OCI-LY7 (cell line): ENCODE measurements at regions of chr1 and their contacts with region 1.

Region 1: DNA sequence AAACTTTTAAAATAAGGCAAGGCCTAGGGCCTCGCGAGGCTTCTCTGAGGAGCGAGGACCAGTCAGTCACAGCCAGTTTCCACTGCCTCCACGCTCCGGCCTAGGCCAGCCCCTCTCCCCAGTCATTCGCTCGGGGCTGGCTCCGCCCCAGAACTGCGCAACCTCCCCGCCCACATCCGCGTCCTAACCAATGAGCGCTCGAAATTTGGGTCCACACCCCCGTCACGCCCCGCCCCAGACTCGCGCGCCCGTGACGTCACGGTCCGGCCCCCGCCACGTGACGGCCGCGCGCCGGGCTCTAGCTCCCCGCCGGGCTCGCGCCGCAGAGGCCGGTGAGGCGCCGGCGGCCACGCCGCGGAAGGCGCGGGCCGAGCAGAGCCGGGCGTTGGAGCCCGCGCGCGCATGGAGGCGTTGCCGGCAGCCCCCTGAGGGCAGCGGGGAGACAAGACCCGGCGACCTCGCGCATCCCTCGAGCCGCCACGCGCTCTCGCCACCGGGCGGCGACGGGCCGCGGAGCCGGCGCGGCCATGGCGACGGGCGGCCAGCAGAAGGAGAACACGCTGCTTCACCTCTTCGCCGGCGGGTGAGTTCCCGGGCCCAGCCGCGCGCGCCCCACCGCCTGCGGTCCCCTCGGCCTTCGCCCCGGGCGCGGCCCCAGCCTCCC is at the start of gene SLC25A33:
- DNase-seq: peak; percentile 98
- H3K4me3 ChIP-seq: peak within 1 kb of the TSS; percentile 98
- H3K27ac ChIP-seq: peak within 1 kb of the TSS; percentile 77
- H3K4me1 ChIP-seq: peaks cover 23% of the 10 kb centered on the region
- CTCF ChIP-seq: no peak
- total RNA-seq, gene SLC25A33: 14.4 and 15.1 TPM in 2 replicates

Region 2: GRCh38 chr1:8687039-8687438 is 852.3 kb before region 1 on chr1:
- CTCF ChIA-PET with region 1: no interaction called
- POLR2A ChIA-PET with region 1: no interaction called
- intact Hi-C with region 1: no loop called
- DNase-seq: no peak
- H3K4me3 ChIP-seq: no peak overlapping the region
- H3K27ac ChIP-seq: no peak overlapping the region
- H3K4me1 ChIP-seq: peaks cover 16% of the 10 kb centered on the region
- CTCF ChIP-seq: no peak

Region 3: GRCh38 chr1:9494929-9495758 is 44.2 kb before region 1 on chr1:
- CTCF ChIA-PET with region 1: no interaction called
- POLR2A ChIA-PET with region 1: interaction called, 3 read pairs
- intact Hi-C with region 1: loop called (anchors 2 kb)
- DNase-seq: peak; percentile 82
- H3K4me3 ChIP-seq: peak overlapping the region; percentile 62
- H3K27ac ChIP-seq: no peak overlapping the region
- H3K4me1 ChIP-seq: peaks cover 9% of the 10 kb centered on the region
- CTCF ChIP-seq: peak; percentile 95

Region 4: DNA sequence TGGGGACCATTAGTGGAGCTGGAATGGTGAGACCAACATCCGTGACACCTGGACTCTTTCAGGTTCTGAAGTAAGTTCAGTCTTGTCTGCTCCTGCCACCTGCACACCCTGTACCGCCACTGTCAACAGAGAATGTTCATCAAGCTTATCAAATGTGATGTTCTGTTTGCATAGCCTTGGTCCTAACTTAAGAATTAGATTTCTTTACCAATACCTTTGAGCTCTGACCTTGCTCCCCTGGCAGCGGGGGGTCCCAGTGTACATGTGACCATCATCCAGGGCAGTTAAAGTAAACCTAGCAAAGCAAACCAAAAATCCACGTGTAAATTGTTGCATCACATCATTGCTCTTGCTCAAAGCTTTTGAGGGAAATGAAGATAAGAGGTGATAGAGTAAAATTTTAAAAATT is 14.4 kb after region 1 on chr1:
- CTCF ChIA-PET with region 1: interaction called, 4 read pairs
- POLR2A ChIA-PET with region 1: interaction called, 10 read pairs
- intact Hi-C with region 1: no loop called
- DNase-seq: no peak
- H3K4me3 ChIP-seq: no peak overlapping the region
- H3K27ac ChIP-seq: no peak overlapping the region
- H3K4me1 ChIP-seq: peaks cover 23% of the 10 kb centered on the region
- CTCF ChIP-seq: no peak

Region 5: DNA sequence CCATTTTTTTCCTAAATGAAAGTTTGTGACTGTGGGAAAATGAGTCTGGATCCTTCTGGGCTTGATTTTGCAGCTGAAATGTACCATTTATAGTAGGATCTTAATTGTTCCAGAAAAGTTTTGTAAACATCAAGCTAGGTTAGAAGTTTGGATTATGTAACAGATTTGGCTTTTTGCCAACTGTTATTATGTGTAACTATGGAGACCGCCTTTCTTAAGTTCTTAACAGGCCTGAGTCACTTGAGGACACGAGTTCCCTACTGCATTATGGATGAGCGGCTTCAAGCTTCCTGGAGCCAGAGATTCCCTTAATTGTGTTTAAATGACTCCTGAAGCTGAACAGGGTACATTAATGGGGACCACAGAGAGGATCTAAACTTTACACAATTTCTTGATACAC is 22.1 kb after region 1 on chr1:
- CTCF ChIA-PET with region 1: interaction called, 3 read pairs
- POLR2A ChIA-PET with region 1: interaction called, 7 read pairs
- intact Hi-C with region 1: loop called (anchors 2 kb)
- DNase-seq: peak; percentile 24
- H3K4me3 ChIP-seq: no peak overlapping the region
- H3K27ac ChIP-seq: no peak overlapping the region
- H3K4me1 ChIP-seq: peaks cover 52% of the 10 kb centered on the region
- CTCF ChIP-seq: no peak

Region 6: GRCh38 chr1:9573723-9574122 is 34.4 kb after region 1 on chr1:
- CTCF ChIA-PET with region 1: no interaction called
- POLR2A ChIA-PET with region 1: interaction called, 4 read pairs
- intact Hi-C with region 1: loop called (anchors 5 kb)
- DNase-seq: peak; percentile 55
- H3K4me3 ChIP-seq: no peak overlapping the region
- H3K27ac ChIP-seq: no peak overlapping the region
- H3K4me1 ChIP-seq: peaks cover 17% of the 10 kb centered on the region
- CTCF ChIP-seq: peak; percentile 75

Region 7: DNA sequence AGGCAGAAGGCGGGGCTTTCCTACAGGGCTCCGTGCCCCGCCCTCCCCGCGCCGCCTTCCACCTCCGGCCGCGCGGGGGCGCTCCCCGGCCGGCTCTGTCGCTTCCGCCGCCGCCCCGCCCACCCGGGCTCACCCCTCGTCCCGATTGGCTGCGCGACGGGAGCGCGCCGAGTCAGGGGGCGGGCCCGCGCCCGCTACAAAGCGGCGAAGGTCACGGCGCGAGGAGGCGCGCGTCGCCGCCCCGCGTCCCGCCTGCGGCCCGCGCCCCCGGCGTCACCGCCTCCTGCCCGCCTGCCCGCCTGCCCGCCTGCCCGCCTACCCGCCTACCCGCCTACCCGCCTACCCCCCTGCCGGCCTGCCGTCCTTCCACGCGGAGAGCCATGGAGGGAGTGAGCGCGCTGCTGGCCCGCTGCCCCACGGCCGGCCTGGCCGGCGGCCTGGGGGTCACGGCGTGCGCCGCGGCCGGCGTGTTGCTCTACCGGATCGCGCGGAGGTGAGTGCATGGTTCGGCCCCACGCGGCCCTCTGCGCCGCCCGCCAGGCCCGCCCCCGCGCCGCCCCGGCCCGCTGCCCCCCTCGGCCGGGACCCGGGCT is 49.4 kb after region 1 on chr1 and contains the start of gene TMEM201:
- CTCF ChIA-PET with region 1: no interaction called
- POLR2A ChIA-PET with region 1: no interaction called
- intact Hi-C with region 1: loop called (anchors 1 kb)
- DNase-seq: peak; percentile 95
- H3K4me3 ChIP-seq: peak within 1 kb of the TSS; percentile 90
- H3K27ac ChIP-seq: no peak within 1 kb of the TSS
- H3K4me1 ChIP-seq: peaks cover 40% of the 10 kb centered on the region
- CTCF ChIP-seq: peak; percentile 79
- total RNA-seq, gene TMEM201: 5.3 and 7.5 TPM in 2 replicates

Region 8: GRCh38 chr1:9942939-9943788 is 403.9 kb after region 1 on chr1 and contains the starts of genes LZIC and NMNAT1:
- CTCF ChIA-PET with region 1: no interaction called
- POLR2A ChIA-PET with region 1: no interaction called
- intact Hi-C with region 1: no loop called
- DNase-seq: peak; percentile 96
- H3K4me3 ChIP-seq: peak within 1 kb of the TSS; percentile 89
- H3K27ac ChIP-seq: peak within 1 kb of the TSS; percentile 74
- H3K4me1 ChIP-seq: peaks cover 10% of the 10 kb centered on the region
- CTCF ChIP-seq: no peak
- total RNA-seq, gene LZIC: 19.1 and 29.3 TPM in 2 replicates
- total RNA-seq, gene NMNAT1: 3.8 and 5.4 TPM in 2 replicates